Posterior vena cava (tissue), 2 donors: ENCODE measurements at regions of chr12 and their contacts with region 1.

Region 1: GRCh38 chr12:53052419-53053217 is 2.8 kb downstream of the TNS2 start:
- DNase-seq: peak; percentile 96

Region 2: GRCh38 chr12:52924764-52925716 is 127.6 kb before region 1 on chr12:
- intact Hi-C with region 1: no loop called
- DNase-seq: no peak

Region 3: GRCh38 chr12:53090563-53090962 is 37.9 kb after region 1 on chr12:
- intact Hi-C with region 1: loop called in 1 of 2 experiments (anchors 1 kb)
- DNase-seq: no peak